IMR-90 (cell line): ENCODE measurements at regions of chr20 and their contacts with region 1.

Region 1: DNA sequence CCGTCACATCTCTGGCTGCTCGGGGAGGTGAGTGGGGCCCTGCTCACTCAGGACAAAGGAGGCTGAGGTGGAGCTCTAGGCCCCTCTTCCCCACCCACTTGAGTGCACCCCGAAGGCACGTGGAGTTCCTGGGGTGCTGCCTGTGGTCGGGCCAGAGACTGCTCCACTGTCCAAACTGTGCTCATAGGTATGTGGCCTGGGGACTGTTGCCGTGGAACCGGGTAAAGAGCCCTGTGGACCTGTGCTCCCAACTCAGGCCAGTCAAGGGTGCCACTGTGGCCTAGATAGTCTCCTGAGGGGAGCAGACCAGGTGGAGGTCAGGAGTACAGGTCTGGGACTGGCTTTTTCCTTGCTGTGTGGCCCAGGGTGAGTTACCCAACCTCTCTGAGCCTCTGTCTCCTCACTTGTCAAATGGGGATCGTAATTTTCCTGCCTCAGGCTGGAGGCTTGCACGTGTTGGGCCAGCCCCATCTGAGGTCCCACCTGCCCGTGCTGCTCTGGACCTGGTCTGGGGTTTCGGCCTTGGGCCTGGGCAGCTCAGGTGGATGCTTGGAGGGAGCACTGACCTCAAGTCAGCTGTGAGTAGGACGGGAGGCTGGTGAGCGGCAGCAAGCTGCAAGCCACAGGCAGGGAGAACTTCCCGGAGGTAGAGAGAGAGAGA is 12.4 kb upstream of the NPBWR2 start:
- DNase-seq: no peak
- ATAC-seq: no peak; the same call in 1 of the 2 replicates
- H3K4me3 ChIP-seq: no peak overlapping the region
- H3K27ac ChIP-seq: no peak overlapping the region
- H3K4me1 ChIP-seq: no peaks in the 10 kb centered on the region
- H3K27me3 ChIP-seq: peaks cover 30% of the 10 kb centered on the region
- CTCF ChIP-seq: no peak
- POLR2A ChIP-seq: no peak
- RAD21 ChIP-seq: no peak

Region 2: GRCh38 chr20:63980806-63981728 is 138.7 kb before region 1 on chr20 and contains the start of gene PRPF6:
- CTCF ChIA-PET with region 1: interaction called, 3 read pairs
- POLR2A ChIA-PET with region 1: no interaction called
- dilution Hi-C with region 1: no loop called
- in situ Hi-C with region 1: no loop called
- intact Hi-C with region 1: loop called (anchors 1 kb)
- DNase-seq: peak; percentile 92
- ATAC-seq: peak; percentile 74
- H3K4me3 ChIP-seq: peak within 1 kb of the TSS; percentile 91
- H3K27ac ChIP-seq: peak within 1 kb of the TSS; percentile 82
- H3K4me1 ChIP-seq: peaks cover 26% of the 10 kb centered on the region
- H3K27me3 ChIP-seq: no peaks in the 10 kb centered on the region
- CTCF ChIP-seq: peak; percentile 97
- POLR2A ChIP-seq: peak; percentile 80
- RAD21 ChIP-seq: peak; percentile 43
- total RNA-seq, gene PRPF6: 68.6 and 71.3 TPM in 2 replicates

Region 3: GRCh38 chr20:64038565-64039292 is 81.1 kb before region 1 on chr20:
- CTCF ChIA-PET with region 1: interaction called, 8 read pairs
- POLR2A ChIA-PET with region 1: no interaction called
- dilution Hi-C with region 1: no loop called
- in situ Hi-C with region 1: no loop called
- intact Hi-C with region 1: loop called (anchors 1 kb)
- DNase-seq: peak; percentile 67
- ATAC-seq: peak; percentile 87
- H3K4me3 ChIP-seq: peak overlapping the region; percentile 32
- H3K27ac ChIP-seq: no peak overlapping the region
- H3K4me1 ChIP-seq: peaks cover 5% of the 10 kb centered on the region; the same call in 1 of the 2 replicates
- H3K27me3 ChIP-seq: peaks cover 46% of the 10 kb centered on the region
- CTCF ChIP-seq: peak; percentile 69
- POLR2A ChIP-seq: no peak
- RAD21 ChIP-seq: peak; percentile 62

Region 4: DNA sequence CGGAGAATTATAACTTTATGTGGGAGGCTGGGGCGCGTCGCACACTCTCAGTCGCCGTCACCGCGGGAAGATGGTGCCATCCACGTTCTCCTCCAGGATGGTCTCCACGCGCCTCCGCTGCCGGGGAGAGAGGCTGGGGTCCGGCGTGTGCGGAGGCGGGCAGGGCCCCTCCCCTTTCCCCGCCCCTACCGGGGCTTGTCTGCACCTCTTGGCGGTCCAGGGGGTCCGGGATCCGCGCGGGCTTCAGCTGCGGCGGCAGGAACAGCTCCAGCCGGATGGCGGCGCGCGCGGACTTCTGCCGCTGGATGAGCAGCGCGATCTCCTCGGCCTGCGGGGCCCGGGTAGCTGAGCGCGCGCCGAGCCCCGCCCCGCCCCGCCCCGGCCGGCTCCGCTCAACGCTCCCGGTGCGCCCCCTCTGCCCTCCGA is 36.4 kb before region 1 on chr20:
- CTCF ChIA-PET with region 1: interaction called, 6 read pairs
- POLR2A ChIA-PET with region 1: no interaction called
- dilution Hi-C with region 1: no loop called
- in situ Hi-C with region 1: no loop called
- intact Hi-C with region 1: loop called (anchors 1 kb)
- DNase-seq: peak; percentile 67
- ATAC-seq: peak; percentile 53
- H3K4me3 ChIP-seq: peak overlapping the region; percentile 63
- H3K27ac ChIP-seq: no peak overlapping the region
- H3K4me1 ChIP-seq: peaks cover 13% of the 10 kb centered on the region
- H3K27me3 ChIP-seq: peaks cover 50% of the 10 kb centered on the region
- CTCF ChIP-seq: peak; percentile 64
- POLR2A ChIP-seq: no peak
- RAD21 ChIP-seq: peak; percentile 59

Region 5: DNA sequence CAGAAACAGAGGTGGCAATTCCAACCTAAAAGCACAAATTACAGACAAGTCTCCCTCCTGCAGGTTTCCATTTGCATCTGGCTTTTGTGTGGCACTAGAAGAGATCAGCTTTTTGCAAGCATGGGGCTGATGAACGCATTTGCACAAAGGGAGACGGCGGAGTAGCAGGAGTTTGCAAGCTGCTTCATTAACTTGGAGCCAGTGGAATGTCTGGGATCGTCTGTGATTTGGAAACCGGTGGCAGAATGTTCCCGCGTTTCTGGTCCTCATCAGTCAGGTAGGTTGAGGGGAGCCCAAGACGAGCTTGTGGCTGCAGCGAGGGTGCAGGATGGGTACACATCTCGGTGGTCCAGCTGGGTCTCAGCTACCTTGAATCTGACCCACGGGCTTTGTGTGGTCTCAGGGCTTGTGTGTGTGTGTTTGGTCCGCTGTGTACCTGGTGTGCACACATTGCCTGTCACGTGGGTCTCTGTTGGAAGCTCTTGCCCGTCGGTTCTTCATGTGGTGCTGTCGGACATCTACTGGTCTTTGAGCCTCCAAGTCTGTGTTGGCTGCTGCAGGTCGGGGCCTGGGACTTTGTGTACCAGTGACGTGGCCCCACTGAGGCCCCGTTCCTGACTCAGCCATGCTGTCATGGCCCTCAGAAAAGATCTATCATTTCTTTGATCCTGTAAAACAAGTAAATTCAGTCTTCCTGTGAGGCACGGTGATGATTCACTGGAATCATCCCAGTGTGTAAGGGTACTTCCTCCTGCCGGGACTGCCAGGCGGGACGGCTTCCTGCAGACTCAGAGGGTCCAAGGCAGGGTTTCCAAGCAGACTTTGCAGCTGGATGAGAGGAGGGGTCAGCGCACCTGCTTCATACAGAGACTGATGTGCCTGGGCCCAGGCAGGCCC is 32.1 kb after region 1 on chr20:
- CTCF ChIA-PET with region 1: no interaction called
- POLR2A ChIA-PET with region 1: no interaction called
- dilution Hi-C with region 1: no loop called
- in situ Hi-C with region 1: no loop called
- intact Hi-C with region 1: no loop called
- DNase-seq: peak; percentile 46
- ATAC-seq: no peak
- H3K4me3 ChIP-seq: no peak overlapping the region
- H3K27ac ChIP-seq: no peak overlapping the region
- H3K4me1 ChIP-seq: no peaks in the 10 kb centered on the region
- H3K27me3 ChIP-seq: peaks cover 16% of the 10 kb centered on the region
- CTCF ChIP-seq: no peak
- POLR2A ChIP-seq: no peak
- RAD21 ChIP-seq: no peak

Region 6: DNA sequence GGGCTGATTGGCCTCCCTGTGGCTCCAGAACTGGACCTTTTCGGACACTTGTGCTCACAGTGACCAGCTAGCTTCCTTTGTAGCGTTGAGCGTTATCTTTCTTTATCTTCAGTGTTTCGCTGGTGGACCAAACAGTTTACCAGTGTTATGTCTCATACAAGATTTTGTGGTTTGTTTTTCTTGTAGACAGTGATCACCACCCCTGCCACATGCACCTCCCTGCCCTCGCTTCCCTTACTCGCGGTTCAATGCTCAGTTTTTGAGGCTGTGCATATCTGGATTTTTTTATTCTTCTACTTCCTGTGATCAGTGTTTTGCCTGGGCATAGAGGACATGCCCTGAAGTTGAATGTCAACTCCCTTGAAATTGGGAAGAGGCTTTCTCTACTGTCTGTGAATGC is 60.9 kb after region 1 on chr20:
- CTCF ChIA-PET with region 1: no interaction called
- POLR2A ChIA-PET with region 1: no interaction called
- dilution Hi-C with region 1: no loop called
- in situ Hi-C with region 1: no loop called
- intact Hi-C with region 1: no loop called
- DNase-seq: no peak
- ATAC-seq: no peak
- H3K4me3 ChIP-seq: no peak overlapping the region
- H3K27ac ChIP-seq: no peak overlapping the region
- H3K4me1 ChIP-seq: no peaks in the 10 kb centered on the region
- H3K27me3 ChIP-seq: peaks cover 23% of the 10 kb centered on the region
- CTCF ChIP-seq: no peak
- POLR2A ChIP-seq: no peak
- RAD21 ChIP-seq: no peak